Activated CD4-positive, alpha-beta T cell treated with anti-CD3 and anti-CD28 coated beads, Interleukin-2, amount 10 ng/mL, durations not matched to agents 24 days and 14 days (primary cell): ENCODE measurements at regions of chr5 and their contacts with region 1.

Region 1: GRCh38 chr5:10353241-10354047 is at the start of gene MARCHF6:
- DNase-seq: peak; percentile 98
- H3K4me3 Mint-ChIP-seq: peak within 1 kb of the TSS; percentile 98
- H3K27ac Mint-ChIP-seq: peak within 1 kb of the TSS; percentile 100
- H3K4me1 Mint-ChIP-seq: peaks cover 28% of the 10 kb centered on the region
- H3K27me3 Mint-ChIP-seq: no peaks in the 10 kb centered on the region
- total RNA-seq, gene MARCHF6: 106 and 113 TPM in 2 replicates

Region 2: GRCh38 chr5:10418654-10419345 is 65.4 kb after region 1 on chr5:
- intact Hi-C with region 1: loop called (anchors 1 kb)
- DNase-seq: no peak
- H3K4me3 Mint-ChIP-seq: no peak overlapping the region
- H3K27ac Mint-ChIP-seq: peak overlapping the region; percentile 25
- H3K4me1 Mint-ChIP-seq: peaks cover 23% of the 10 kb centered on the region
- H3K27me3 Mint-ChIP-seq: no peaks in the 10 kb centered on the region

Region 3: DNA sequence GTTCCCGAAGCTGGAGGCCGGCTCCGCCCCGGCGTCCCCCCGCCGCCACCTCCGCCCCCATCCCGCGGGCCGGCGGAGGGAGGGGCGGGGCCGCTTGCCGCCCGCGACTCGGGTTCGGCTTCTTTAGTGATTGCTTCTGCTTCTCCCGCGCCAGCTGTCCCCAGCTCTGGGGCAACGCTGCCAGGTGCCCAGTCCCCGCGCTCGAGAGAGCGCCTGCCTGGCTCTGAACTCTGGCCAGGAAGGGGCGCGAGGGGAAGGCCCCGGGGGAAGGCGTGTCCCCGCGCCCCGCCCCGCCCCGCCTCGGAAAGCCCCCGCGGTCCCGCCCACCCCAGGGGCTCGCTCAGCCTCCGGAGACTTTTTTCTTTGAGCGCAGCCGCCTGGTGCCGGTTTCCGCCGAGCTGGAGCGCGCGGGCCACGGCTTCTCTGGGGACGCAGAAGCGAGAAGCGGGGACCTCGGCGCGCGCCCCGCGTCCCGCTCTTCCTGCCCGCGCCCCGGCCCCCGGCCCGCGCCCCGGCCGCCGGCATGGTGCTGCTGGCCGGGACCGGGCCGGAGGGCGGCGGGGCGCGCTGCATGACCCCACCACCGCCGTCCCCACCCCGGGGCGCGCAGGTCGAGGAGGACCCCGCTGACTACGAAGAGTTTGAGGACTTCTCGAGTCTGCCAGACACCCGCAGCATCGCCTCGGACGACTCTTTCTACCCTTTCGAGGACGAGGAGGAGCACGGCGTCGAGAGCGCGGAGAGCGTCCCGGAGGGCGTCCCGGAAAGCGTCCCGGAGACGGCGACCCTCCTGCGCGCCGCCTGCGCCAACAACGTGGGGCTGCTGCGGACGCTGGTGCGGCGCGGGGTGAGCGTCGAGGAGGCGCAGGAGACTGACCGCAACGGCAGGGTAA is 210.7 kb after region 1 on chr5 and contains the start of gene ANKRD33B:
- intact Hi-C with region 1: loop called (anchors 2 kb)
- DNase-seq: peak; percentile 95
- H3K4me3 Mint-ChIP-seq: peak within 1 kb of the TSS; percentile 90
- H3K27ac Mint-ChIP-seq: peak within 1 kb of the TSS; percentile 88
- H3K4me1 Mint-ChIP-seq: peaks cover 20% of the 10 kb centered on the region
- H3K27me3 Mint-ChIP-seq: peaks cover 23% of the 10 kb centered on the region
- total RNA-seq, gene ANKRD33B: 21.0 and 21.7 TPM in 2 replicates

Region 4: GRCh38 chr5:10635257-10635866 is 281.9 kb after region 1 on chr5:
- intact Hi-C with region 1: loop called (anchors 2 kb)
- DNase-seq: peak; percentile 89
- H3K4me3 Mint-ChIP-seq: peak overlapping the region; percentile 81
- H3K27ac Mint-ChIP-seq: peak overlapping the region; percentile 98
- H3K4me1 Mint-ChIP-seq: peaks cover 71% of the 10 kb centered on the region
- H3K27me3 Mint-ChIP-seq: no peaks in the 10 kb centered on the region